Activated T-helper 1 cell treated with anti-CD3 and anti-CD28 coated beads, Interleukin-12 subunit alpha, Interleukin-12 subunit beta, Interleukin-2, Interleukin-4 antibody, amounts not matched to agents 30 ng/mL and 10 ng/mL and 1 ng/mL, durations not matched to agents 14 hours and 24 hours and 36 hours (primary cell): ENCODE measurements at regions of chr11 and their contacts with region 1.

Region 1: DNA sequence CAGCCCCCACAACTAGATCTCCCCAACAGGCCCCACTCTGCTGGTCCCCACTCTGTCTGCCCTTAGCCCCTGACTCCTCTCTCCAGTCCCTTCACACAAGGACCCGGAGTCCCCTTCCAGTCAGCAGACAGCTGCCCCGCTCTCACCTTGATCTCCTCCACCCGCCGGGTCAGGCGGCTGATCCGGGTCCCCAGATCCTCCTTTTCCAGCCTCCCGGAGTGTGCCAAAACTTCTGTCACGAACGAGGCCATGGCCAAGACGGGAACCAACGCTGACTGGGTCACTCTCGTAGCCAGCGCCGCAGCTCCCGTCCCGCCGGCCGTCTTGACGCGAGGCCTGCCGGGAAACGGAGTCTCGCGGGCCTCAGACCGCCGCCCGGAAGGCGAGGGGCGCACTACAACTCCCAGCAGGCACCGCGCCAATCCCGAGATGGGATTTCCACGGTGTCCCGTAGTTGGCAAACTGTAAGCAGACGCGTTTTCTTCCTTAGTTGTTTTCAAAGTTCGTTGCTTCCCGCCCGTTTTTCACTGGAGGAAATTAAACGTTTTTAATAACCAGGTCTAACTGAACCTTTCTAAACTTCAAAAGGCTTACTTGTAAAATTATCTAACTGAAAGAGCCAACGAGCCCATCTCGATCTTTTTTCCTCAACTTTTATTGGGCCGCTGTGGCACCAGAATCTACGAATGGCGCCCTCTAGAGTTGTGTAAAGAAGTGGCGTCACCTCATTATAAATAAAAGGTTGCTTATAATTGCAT is at the start of gene ZW10:
- DNase-seq: peak; percentile 90
- H3K4me3 Mint-ChIP-seq: peak within 1 kb of the TSS; percentile 100
- H3K27ac Mint-ChIP-seq: peak within 1 kb of the TSS; percentile 97
- H3K4me1 Mint-ChIP-seq: peaks cover 14% of the 10 kb centered on the region
- H3K27me3 Mint-ChIP-seq: peaks cover 5% of the 10 kb centered on the region
- total RNA-seq, gene ZW10: 20.5 and 22.6 TPM in 2 replicates

Region 2: GRCh38 chr11:112074026-112074811 is 1699.4 kb before region 1 on chr11 and contains the start of gene NKAPD1:
- intact Hi-C with region 1: loop called (anchors 5 kb)
- DNase-seq: peak; percentile 77
- H3K4me3 Mint-ChIP-seq: peak within 1 kb of the TSS; percentile 94
- H3K27ac Mint-ChIP-seq: peak within 1 kb of the TSS; percentile 95
- H3K4me1 Mint-ChIP-seq: peaks cover 39% of the 10 kb centered on the region
- H3K27me3 Mint-ChIP-seq: no peaks in the 10 kb centered on the region
- total RNA-seq, gene NKAPD1: 29.1 and 33.0 TPM in 2 replicates

Region 3: DNA sequence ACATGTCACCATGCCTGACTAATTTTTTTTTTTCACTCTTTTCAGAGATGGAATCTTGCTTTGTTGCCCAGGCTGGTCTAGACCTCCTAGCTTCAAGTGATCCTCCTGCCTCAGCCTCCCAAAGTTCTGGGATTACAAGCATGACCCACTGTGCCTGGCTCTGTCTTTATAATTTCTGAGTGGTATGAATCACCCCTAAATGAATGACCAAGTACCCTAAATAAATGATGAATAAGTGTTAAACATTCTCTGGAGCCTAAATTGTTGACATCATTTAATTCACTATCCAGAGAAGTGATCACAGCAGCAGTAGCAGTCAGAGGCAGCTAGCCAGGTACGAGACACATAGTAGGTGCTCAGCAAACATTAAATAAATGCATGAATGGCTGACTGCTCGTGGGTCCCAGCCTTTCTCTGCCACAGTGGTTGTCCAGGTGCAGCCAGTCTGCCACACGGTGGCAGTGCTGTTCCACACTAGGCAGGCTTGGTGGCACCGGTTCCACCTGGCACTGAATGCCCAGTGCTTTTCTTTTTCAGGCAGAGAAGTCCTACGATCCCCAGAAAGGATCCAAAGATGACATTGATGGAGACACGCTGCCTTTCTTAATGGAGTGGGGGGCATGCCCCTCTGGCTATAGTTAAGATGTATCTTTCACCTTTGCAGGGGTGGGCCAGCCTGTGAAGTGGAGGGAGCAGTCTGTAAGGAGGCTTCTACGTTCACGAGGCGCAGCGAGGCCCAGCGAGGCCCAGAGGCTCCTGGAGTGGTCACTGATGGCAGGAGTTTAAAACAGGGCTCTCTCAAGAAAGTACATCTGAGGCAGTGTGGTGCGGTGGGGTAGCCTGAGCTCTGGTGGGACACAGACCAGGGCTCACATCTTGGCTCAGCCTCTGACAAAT is 467.9 kb before region 1 on chr11:
- intact Hi-C with region 1: loop called (anchors 1 kb)
- DNase-seq: peak; percentile 51
- H3K4me3 Mint-ChIP-seq: no peak overlapping the region
- H3K27ac Mint-ChIP-seq: no peak overlapping the region
- H3K4me1 Mint-ChIP-seq: no peaks in the 10 kb centered on the region
- H3K27me3 Mint-ChIP-seq: peaks cover 16% of the 10 kb centered on the region

Region 4: DNA sequence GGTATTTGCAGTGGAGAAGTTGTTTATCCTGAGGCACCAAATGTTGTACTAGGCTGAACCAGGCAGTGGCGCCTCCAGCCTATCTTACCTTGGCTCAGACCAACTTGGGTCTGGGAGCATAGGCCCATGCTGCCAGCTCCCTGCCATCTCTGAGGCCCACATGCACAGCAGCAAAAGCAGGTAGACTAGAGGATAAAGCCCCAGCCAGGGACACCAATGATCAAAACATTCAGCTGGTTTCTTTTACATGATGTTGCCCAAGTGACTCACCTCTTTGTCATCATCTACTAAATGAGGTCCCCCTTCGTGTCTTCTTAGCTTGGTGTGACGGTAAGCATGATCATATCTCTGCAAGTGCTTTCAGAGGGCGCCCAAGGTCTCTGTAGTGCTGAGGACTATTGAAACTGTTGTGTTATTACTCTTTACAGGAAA is 186.3 kb before region 1 on chr11:
- intact Hi-C with region 1: loop called (anchors 1 kb)
- DNase-seq: peak; percentile 47
- H3K4me3 Mint-ChIP-seq: peak overlapping the region; percentile 1
- H3K27ac Mint-ChIP-seq: peak overlapping the region; percentile 56
- H3K4me1 Mint-ChIP-seq: peaks cover 36% of the 10 kb centered on the region
- H3K27me3 Mint-ChIP-seq: no peaks in the 10 kb centered on the region

Region 5: GRCh38 chr11:113796663-113797259 is 23.2 kb after region 1 on chr11:
- intact Hi-C with region 1: loop called (anchors 1 kb)
- DNase-seq: no peak
- H3K4me3 Mint-ChIP-seq: no peak overlapping the region
- H3K27ac Mint-ChIP-seq: no peak overlapping the region
- H3K4me1 Mint-ChIP-seq: no peaks in the 10 kb centered on the region
- H3K27me3 Mint-ChIP-seq: peaks cover 2% of the 10 kb centered on the region

Region 6: DNA sequence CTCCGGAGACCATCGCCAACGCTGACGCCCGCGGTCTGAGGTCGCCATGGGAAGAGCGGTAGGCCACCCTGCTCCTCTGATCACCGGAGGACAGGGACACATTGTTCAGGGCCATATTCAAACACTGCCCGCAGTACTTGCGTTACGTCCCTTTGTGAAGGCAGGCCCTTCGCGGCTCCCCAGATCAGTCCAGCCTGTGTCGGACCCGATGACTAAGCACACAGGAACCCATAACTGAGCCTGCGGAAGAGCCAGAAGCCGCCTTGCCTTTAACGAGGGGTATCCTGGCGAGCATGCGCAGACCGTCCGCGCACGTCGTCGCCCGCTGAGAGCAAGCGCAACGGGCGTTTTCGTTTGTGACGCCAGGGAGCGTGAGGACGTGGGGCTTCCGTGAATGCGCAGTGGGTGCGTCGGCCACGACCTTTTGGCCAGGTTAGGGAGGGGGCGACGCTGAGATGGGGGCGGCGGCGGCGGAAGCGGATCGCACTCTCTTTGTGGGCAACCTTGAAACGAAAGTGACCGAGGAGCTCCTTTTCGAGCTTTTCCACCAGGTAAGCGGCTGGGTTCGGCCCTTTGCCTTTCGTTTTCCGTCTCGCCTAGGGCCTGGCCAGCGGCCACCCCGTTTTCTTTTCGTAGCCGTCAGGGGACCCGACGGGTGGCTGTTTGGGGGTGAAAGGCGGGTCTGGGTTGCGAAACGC is 626.8 kb after region 1 on chr11 and contains the starts of genes C11orf71 and RBM7:
- intact Hi-C with region 1: loop called (anchors 1 kb)
- DNase-seq: peak; percentile 97
- H3K4me3 Mint-ChIP-seq: peak within 1 kb of the TSS; percentile 92
- H3K27ac Mint-ChIP-seq: peak within 1 kb of the TSS; percentile 98
- H3K4me1 Mint-ChIP-seq: peaks cover 51% of the 10 kb centered on the region
- H3K27me3 Mint-ChIP-seq: no peaks in the 10 kb centered on the region
- total RNA-seq, gene C11orf71: 7.7 and 9.3 TPM in 2 replicates
- total RNA-seq, gene RBM7: 34.4 and 38.8 TPM in 2 replicates